PC-3 (cell line): ENCODE measurements at regions of chr13 and their contacts with region 1.

Region 1: DNA sequence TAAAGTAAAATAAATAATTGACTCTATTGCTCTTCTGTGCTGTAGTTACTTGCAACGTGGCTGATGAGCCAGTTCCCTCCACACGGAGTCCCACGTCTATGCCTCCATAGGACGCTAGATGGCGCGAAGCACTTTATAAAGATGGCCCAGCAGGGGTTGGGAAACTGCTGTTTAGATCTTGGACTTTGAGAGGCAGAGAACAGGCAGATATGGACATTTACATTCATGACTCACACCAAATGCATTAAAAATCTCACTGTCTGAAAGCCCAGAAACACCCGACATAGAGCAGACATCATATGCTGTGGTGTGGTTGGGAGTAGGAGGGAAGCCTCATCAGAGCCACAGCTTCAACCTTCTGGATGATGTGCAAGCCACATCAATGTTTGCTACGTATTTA is 643.1 kb upstream of the ARGLU1 start:
- DNase-seq: peak; percentile 88
- ATAC-seq: peak; percentile 93
- H3K4me3 ChIP-seq: peak overlapping the region; percentile 46; the same call in 1 of the 2 replicates
- H3K27ac ChIP-seq: no peak overlapping the region
- H3K4me1 ChIP-seq: peaks cover 13% of the 10 kb centered on the region; the same call in 1 of the 2 replicates
- H3K27me3 ChIP-seq: no peaks in the 10 kb centered on the region
- CTCF ChIP-seq: peak; percentile 89

Region 2: GRCh38 chr13:107301724-107302374 is 90.8 kb after region 1 on chr13:
- CTCF ChIA-PET with region 1: no interaction called
- POLR2A ChIA-PET with region 1: no interaction called
- intact Hi-C with region 1: loop called (anchors 2 kb)
- DNase-seq: peak; percentile 2
- ATAC-seq: no peak
- H3K4me3 ChIP-seq: no peak overlapping the region
- H3K27ac ChIP-seq: no peak overlapping the region
- H3K4me1 ChIP-seq: no peaks in the 10 kb centered on the region; the same call in 1 of the 2 replicates
- H3K27me3 ChIP-seq: no peaks in the 10 kb centered on the region
- CTCF ChIP-seq: no peak; the same call in 1 of the 2 replicates